Spleen (tissue), 13 donors: ENCODE measurements at regions of chr15 and their contacts with region 1.

Region 1: DNA sequence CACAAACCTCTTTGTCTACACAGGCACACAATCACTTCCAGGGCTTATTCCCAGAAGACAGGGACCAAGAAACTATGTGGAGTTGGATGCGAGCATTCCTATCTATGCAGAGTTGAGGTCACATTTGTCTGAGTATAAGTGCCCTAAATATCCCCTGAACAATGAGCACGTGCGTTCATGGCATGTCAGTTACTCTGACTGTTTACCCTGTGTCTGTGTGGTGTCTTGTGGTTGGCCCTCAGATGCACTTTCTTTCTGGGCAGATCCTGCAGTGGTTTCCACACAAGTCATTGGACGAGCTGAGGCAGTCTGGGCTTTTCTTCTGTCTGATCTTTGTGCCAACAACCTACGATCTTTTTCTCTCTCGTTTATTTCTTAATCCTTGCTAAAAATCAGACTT is 134.5 kb downstream of the FBN1 start:
- DNase-seq: no peak
- H3K4me3 ChIP-seq: no peak overlapping the region
- H3K27ac ChIP-seq: no peak overlapping the region
- H3K4me1 ChIP-seq: peaks cover 0 to 3% (median 0%) of the 10 kb centered on the region in 6 donors
- H3K27me3 ChIP-seq: no peaks in the 10 kb centered on the region
- CTCF ChIP-seq: no peak
- POLR2A ChIP-seq: no peak

Region 2: GRCh38 chr15:46644501-46645481 is 1866.2 kb before region 1 on chr15:
- intact Hi-C with region 1: no loop called
- DNase-seq: no peak
- H3K4me3 ChIP-seq: no peak overlapping the region
- H3K27ac ChIP-seq: no peak overlapping the region
- H3K4me1 ChIP-seq: no peaks in the 10 kb centered on the region
- H3K27me3 ChIP-seq: no peaks in the 10 kb centered on the region
- CTCF ChIP-seq: no peak
- POLR2A ChIP-seq: no peak

Region 3: DNA sequence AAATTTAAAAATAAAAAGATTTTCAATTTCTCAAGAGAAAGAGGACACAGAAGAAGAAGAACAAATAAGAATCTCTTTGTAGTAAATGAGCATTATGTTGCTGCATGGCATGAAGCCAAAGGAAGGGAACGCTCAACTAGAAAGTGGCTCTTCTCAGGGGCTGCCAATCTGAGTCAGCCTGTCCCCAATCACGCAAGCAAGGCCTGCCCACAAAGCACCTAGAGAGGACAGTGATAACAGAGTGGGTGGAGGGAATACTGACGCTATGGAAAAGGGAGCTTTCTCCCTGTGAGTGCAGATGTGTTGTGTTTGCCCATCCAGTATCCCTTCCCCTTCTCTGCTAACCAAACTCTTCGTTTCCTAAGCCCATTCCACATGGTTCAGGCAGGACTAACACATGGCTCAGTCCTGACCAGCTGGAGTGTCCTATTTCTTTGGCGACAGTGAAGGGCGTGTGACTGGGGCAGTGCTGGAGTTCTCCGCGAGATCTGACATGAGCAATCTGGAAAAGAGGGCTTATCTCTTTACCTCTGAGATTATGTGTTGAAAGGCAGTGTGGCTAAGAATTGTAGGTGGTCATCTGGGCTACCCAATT is 120.3 kb after region 1 on chr15:
- intact Hi-C with region 1: loop called (anchors 10 kb)
- DNase-seq: no peak
- H3K4me3 ChIP-seq: no peak overlapping the region
- H3K27ac ChIP-seq: no peak overlapping the region
- H3K4me1 ChIP-seq: peaks cover 0 to 5% (median 0%) of the 10 kb centered on the region in 6 donors
- H3K27me3 ChIP-seq: no peaks in the 10 kb centered on the region
- CTCF ChIP-seq: no peak
- POLR2A ChIP-seq: no peak